GM10248 (cell line): ENCODE measurements at regions of chr2 and their contacts with region 1.

Region 1: DNA sequence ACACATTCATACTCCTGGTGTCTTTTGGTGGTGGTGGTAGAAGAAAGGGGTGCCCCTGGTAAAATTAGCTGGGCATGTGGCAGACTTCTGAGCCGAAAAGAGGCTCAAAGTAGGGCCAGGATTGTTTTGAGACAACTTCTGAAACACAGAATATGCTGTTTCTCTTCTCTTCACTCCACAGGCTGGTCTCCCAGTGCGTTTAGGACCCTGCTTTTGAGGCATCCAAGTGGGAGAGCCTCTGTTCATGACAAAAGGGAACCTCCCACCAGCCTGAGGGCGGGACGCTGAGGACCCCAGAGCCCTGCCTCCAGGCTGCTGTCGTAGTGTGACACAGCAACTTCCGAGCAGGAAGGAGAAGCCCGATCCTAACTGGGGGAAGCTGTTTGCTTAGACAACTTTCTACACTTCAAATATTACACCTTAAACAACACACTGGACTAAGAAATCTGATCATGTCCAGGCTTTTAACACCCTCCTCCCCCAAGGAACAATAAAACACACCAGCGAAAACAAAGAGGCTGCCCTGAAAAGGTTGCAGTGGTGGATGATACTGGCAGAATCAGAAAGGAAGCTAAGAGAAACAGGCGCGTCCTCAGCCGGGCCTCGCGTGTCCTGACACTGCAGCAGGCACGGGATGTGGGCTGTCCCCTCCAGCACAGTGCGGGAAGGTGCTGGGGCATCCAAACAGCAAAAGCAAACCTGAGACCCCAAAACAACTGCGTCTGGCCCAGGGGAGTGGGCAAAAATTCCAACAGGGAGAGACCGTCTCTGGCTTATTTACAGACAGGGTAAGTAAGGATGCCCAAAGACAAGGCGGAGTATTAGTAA is 9.3 kb downstream of the SERTAD2 start:
- DNase-seq: peak; percentile 75
- CTCF ChIP-seq: no peak

Region 2: DNA sequence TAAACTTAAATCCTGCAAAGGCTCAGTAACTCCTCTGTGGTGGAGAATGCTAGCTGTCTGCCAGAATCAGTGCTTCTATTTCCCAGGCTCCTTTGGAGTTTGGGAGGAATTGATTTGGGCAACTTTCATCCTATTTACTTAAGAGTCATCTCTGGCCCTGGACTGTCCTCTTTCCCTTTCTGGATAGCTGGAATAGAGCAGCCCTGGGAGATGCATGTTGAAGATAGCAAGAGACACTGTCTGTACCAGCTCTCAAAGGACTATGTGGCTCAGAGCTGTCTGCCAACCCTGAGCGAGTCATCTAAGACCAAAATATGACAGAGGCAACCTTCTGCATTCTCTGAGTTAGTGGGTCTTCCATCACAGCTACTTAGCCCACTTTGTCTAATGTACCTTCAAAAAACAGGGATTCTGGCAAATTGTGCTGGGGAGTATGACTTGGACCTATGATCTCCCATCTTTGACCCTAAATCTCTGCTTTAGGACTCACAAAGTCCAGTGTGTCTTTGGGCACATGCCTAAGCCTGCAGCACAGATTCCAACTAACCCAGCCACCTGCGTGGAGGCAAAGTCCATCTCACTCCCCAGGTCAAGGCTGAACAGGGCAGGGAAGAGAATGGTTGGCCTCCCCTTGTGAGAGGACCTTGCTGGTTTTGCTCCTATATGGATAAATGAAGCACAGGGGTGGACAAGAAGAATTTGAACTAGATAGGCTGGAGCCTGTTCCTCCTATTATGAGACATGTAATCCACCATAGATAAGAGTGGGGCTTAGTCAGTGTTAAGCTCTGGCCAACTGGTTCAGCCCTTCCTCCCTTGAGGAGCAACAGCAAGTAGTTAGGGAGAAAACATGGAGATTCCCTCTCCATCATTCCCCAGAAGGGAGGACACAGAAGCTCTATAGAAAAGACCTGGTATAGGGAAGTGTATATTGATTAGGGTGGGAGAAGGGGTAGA is 401.0 kb before region 1 on chr2:
- CTCF ChIA-PET with region 1: no interaction called
- POLR2A ChIA-PET with region 1: no interaction called
- DNase-seq: no peak
- CTCF ChIP-seq: no peak

Region 3: DNA sequence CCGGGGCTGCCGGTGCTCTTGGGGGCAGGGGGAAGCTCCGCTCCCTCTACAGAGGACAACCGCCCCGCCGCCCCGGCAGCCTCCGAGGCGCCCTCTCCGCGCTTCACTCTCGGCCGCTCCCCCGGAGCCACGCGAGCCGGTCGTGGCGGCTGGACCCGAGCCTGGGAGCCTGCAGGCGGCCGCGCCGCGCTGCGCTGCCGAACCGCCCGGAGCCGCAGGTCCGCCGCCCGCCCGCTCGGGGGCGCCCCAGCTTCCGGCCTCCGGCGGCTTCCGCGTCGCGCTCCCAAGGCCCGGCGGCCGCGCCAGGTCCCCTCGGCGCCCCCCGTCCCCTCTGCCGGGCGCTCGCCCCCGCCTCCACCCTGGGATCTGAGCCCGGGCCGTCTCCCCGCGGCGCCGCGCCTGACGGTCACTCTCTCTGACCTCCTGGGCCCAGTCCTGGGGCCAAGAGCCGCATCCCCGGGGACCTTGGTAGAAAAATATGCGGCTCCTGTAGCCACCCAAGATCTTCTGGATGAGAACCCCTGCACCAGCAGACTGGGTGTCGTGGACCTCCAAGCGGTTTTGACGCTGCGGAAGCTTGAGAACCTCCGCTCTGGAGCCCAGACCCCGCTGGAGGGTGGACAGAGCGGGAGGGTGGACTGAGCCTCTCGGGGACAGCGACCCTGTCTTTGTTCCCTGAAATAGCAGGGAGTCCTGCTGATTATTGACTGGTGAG is 35.0 kb before region 1 on chr2:
- CTCF ChIA-PET with region 1: interaction called, 43 read pairs
- POLR2A ChIA-PET with region 1: interaction called, 4 read pairs
- DNase-seq: peak; percentile 91
- CTCF ChIP-seq: peak; percentile 82

Region 4: GRCh38 chr2:64666810-64667438 is 22.5 kb after region 1 on chr2:
- CTCF ChIA-PET with region 1: interaction called, 45 read pairs
- POLR2A ChIA-PET with region 1: no interaction called
- DNase-seq: no peak
- CTCF ChIP-seq: no peak

Region 5: GRCh38 chr2:64730551-64731262 is 86.3 kb after region 1 on chr2:
- CTCF ChIA-PET with region 1: interaction called, 12 read pairs
- POLR2A ChIA-PET with region 1: no interaction called
- DNase-seq: no peak
- CTCF ChIP-seq: no peak

Region 6: GRCh38 chr2:64864674-64865072 is 220.3 kb after region 1 on chr2:
- CTCF ChIA-PET with region 1: interaction called, 31 read pairs
- POLR2A ChIA-PET with region 1: interaction called, 8 read pairs
- DNase-seq: peak; percentile 51
- CTCF ChIP-seq: no peak